Left cardiac atrium (tissue), 4 donors: ENCODE measurements at regions of chr3 and their contacts with region 1.

Region 1: DNA sequence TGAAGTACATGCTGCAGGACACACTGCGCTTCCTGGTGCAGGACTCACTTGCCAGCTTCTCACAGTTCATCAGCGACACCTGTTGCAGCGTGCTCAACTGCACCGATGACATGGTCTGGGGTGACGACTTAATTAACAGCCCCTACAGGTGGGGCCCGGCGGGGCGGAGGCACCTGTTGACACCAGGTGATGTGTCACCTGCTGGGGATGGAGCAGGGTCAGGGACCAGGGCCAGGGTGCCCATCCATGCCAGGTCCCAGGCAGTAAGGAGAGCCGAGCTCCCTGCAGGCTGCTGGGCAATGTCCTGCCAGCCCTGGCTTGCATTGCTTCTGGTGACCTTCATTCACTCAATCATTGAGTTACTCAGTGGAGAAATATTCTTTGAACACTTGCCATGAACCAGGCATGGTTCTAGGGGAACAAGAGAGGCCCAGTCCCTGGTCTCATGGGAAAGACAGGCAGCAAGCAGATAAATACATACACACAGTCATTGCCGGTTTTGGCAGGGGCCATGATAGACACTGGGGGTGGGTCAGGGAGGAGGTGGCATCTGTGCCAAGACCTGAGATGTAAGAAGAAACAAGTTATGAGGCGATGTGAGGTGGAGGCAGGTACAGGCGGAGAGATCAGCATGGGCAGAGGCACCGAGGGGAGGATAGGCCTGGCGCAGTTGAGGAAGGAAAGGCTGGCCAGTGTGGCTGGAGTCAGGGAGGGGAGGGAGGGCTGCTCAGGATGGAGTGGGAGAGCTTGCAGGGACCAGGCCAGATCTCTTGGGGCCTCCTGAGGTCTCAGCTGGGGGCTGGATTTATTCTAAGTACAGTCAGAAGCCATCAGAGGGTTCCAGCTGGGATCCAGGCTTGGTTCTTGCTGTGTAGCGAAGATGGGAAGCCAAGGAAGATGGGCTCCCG is 30.8 kb downstream of the DNAH1 start:
- DNase-seq: no peak
- ATAC-seq: peak; percentile 68 to 81

Region 2: GRCh38 chr3:52220380-52221026 is 126.4 kb before region 1 on chr3:
- intact Hi-C with region 1: loop called (anchors 5 kb)
- DNase-seq: peak; percentile 85
- ATAC-seq: peak; percentile 53 to 67